Activated naive CD4-positive, alpha-beta T cell treated with anti-CD3 and anti-CD28 coated beads, Interleukin-2, amount 10 ng/mL, durations not matched to agents 7 days and 5 days (primary cell): ENCODE measurements at regions of chr9 and their contacts with region 1.

Region 1: DNA sequence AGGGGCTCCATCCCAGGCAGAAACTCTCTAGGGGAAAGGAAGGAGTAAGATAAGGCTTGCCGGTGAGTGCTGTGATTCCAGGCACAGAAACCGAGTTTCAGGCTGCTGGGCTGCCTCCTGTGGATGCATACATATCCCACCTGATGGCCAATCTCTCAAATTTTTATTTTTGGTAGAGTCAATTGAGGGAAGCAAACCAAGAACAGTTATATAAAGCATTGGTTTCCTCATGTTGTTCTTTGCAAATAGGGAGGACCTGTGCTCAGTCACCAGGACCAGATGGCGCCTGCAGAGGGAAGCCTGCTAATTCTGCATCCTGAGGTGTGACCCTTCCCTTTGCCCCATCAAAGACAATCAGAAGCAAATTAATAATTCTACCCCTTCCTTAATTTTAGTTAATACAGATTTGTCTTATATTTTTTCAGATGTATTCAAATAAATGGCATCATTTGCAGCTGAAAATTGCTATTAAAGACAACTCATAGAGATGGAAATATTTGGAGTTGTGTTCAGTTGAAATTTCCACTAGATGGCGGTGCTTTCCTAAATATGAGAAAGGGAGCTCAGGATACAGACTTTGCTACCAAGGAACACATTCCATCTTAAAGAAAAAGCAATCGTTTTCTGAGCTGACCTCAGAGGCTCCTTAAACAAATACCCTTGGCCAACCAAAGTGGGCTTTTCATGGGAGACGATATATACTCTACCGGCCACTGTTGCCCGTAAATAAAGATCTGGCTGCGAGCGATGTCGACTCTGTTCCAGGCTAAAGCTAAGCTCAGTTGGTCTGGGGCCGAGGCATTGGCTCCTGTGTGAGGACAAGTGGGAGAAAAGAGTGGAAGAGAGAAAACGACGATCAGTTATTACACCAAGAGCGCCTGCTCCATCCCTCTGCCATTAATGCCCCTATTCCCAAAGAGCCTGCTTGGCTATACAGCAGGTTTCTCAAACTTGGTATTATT is 225.7 kb upstream of the KLF9 start:
- DNase-seq: no peak
- H3K4me3 Mint-ChIP-seq: no peak overlapping the region
- H3K27ac Mint-ChIP-seq: no peak overlapping the region
- H3K4me1 Mint-ChIP-seq: no peaks in the 10 kb centered on the region
- H3K27me3 Mint-ChIP-seq: peaks cover 4% of the 10 kb centered on the region

Region 2: GRCh38 chr9:70563431-70564204 is 76.5 kb before region 1 on chr9:
- CTCF ChIA-PET with region 1: no interaction called
- DNase-seq: peak; percentile 75
- H3K4me3 Mint-ChIP-seq: peak overlapping the region; percentile 9
- H3K27ac Mint-ChIP-seq: peak overlapping the region; percentile 99
- H3K4me1 Mint-ChIP-seq: peaks cover 54% of the 10 kb centered on the region
- H3K27me3 Mint-ChIP-seq: no peaks in the 10 kb centered on the region

Region 3: DNA sequence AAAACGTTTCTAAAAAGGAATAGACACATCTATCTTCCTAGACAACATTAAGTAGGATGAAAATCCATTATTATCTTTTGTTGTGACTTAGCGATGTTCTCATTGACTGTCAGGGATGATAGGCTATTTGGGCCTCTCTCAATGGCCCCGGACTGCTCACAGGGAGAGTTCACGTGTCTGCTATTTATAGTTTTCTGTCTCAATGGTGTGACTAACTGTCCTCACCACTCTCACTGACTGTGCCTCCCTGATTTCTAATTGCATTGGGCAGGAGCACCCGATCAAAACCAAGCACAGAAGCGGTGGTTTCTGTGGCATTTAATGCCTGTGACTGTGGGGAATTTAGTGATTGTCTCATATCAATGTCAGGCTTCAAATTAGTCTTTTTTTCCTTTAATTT is 61.0 kb after region 1 on chr9:
- CTCF ChIA-PET with region 1: no interaction called
- DNase-seq: no peak
- H3K4me3 Mint-ChIP-seq: no peak overlapping the region
- H3K27ac Mint-ChIP-seq: no peak overlapping the region
- H3K4me1 Mint-ChIP-seq: no peaks in the 10 kb centered on the region
- H3K27me3 Mint-ChIP-seq: no peaks in the 10 kb centered on the region

Region 4: GRCh38 chr9:71249729-71250317 is 609.7 kb after region 1 on chr9:
- CTCF ChIA-PET with region 1: interaction called, 12 read pairs
- DNase-seq: no peak
- H3K4me3 Mint-ChIP-seq: no peak overlapping the region
- H3K27ac Mint-ChIP-seq: no peak overlapping the region
- H3K4me1 Mint-ChIP-seq: no peaks in the 10 kb centered on the region
- H3K27me3 Mint-ChIP-seq: no peaks in the 10 kb centered on the region